MCF 10A (cell line): ENCODE measurements at regions of chr1 and their contacts with region 1.

Region 1: DNA sequence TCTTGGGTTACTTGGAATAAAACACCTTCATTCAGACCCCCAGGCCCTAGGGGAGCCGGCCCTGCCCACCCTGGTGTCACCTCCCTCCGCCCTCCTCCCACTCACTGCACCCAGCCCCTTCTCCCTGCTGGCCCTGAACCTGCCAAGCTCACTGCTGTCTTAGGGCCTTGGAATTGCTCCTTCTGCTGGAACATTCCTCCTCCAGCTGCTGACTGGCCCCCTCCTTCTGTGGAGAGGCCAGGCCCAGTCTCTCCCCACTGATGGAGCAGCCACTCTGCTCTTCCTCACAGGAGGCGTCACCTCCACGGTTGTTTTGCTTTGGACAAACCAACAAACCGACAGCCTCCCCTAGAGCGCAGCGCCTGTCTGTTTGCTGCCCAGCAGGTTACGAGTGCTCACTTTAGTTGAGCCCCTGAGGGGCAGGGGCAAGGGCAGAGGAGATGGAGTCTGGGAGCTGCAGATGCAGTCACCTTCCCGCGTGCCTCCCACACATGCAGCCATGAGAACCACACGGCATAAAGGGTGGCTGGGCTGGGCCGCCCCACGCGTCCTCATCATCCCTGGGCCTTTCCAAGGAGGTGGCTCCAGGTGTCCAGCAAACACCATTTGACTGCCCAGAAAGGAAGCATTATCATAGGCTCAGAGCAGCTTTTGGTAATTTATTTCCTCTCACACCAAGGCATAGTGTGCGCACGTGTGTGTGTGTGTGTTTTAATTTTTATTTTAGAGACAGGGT is 9.5 kb downstream of the OXCT2 start:
- DNase-seq: no peak
- H3K4me3 Mint-ChIP-seq: no peak overlapping the region
- H3K27ac Mint-ChIP-seq: no peak overlapping the region
- H3K4me1 Mint-ChIP-seq: no peaks in the 10 kb centered on the region
- H3K27me3 Mint-ChIP-seq: no peaks in the 10 kb centered on the region
- CTCF ChIP-seq: no peak

Region 2: GRCh38 chr1:39522661-39523567 is 238.8 kb before region 1 on chr1:
- CTCF ChIA-PET with region 1: no interaction called
- POLR2A ChIA-PET with region 1: no interaction called
- intact Hi-C with region 1: loop called (anchors 5 kb)
- DNase-seq: no peak
- H3K4me3 Mint-ChIP-seq: no peak overlapping the region
- H3K27ac Mint-ChIP-seq: no peak overlapping the region
- H3K4me1 Mint-ChIP-seq: peaks cover 5% of the 10 kb centered on the region
- H3K27me3 Mint-ChIP-seq: no peaks in the 10 kb centered on the region
- CTCF ChIP-seq: no peak

Region 3: GRCh38 chr1:39789571-39790110 is 27.9 kb after region 1 on chr1:
- CTCF ChIA-PET with region 1: no interaction called
- POLR2A ChIA-PET with region 1: no interaction called
- intact Hi-C with region 1: no loop called
- DNase-seq: no peak
- H3K4me3 Mint-ChIP-seq: peak overlapping the region; percentile 78
- H3K27ac Mint-ChIP-seq: peak overlapping the region; percentile 27
- H3K4me1 Mint-ChIP-seq: peaks cover 13% of the 10 kb centered on the region
- H3K27me3 Mint-ChIP-seq: no peaks in the 10 kb centered on the region
- CTCF ChIP-seq: no peak

Region 4: GRCh38 chr1:39859859-39860812 is 98.4 kb after region 1 on chr1:
- CTCF ChIA-PET with region 1: no interaction called
- POLR2A ChIA-PET with region 1: no interaction called
- intact Hi-C with region 1: no loop called
- DNase-seq: no peak
- H3K4me3 Mint-ChIP-seq: no peak overlapping the region
- H3K27ac Mint-ChIP-seq: no peak overlapping the region
- H3K4me1 Mint-ChIP-seq: peaks cover 6% of the 10 kb centered on the region
- H3K27me3 Mint-ChIP-seq: no peaks in the 10 kb centered on the region
- CTCF ChIP-seq: no peak